ENCODE measurements at regions of chr4 and their contacts with region 1.

Region 1: GRCh38 chr4:38663801-38664705 is at the start of gene KLF3:
- DNase-seq: no peak
- ATAC-seq: peak; percentile 79
- H3K4me3 ChIP-seq: peak within 1 kb of the TSS; percentile 80 to 94 (median 83)
- H3K4me3 Mint-ChIP-seq: peak within 1 kb of the TSS; percentile 97
- H3K27ac ChIP-seq: peak within 1 kb of the TSS; percentile 90 to 92
- H3K27ac Mint-ChIP-seq: peak within 1 kb of the TSS; percentile 96
- H3K4me1 ChIP-seq: peaks cover 55 to 61% of the 10 kb centered on the region in 2 donors
- H3K4me1 Mint-ChIP-seq: peaks cover 62% of the 10 kb centered on the region
- H3K27me3 ChIP-seq: no peaks in the 10 kb centered on the region
- H3K27me3 Mint-ChIP-seq: no peaks in the 10 kb centered on the region
- CTCF ChIP-seq: no peak
- total RNA-seq, gene KLF3: 51.9 and 52.8 TPM in 2 replicates

Region 2: DNA sequence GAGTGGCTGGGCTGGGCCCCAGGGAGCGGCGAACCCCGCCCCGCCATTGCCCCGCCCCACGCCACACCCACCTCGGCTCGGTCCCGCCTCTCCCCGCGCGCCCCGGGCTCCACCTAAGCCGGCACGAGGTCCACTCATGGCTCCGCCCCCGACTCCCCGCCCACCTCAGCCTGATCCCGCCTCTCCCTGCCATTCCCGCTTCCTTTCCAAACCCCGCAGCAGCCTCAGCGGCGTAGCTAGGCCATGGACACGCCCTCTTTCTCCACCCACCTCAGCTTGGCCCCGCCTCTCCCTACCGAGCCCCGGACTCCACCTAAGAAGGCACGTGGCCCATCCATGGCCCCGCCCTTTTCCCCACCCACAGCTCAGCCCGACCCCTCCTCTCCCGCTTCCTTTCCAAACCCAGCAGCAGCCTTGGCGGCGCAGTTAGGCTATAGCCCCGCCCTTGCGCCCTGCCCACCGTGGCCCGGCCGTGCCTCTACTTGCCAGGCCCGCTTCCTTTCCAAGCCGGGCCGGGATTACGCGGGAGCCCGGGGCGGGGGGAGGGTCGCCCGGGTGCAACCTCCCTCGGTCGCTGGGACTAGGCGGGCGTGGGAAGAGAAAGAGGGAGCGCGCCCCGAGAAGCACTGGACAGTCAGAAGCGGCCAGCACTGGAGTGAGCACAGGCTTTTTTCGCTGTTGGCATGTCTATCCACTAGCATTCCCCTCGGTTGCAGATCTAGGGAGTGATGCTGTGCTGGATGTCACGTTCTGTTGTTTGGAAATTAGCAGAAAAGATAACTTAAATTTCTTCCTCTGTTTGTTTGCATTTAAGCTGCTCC is 977.5 kb before region 1 on chr4 and contains the start of gene RELL1:
- CTCF ChIA-PET with region 1: no interaction called
- POLR2A ChIA-PET with region 1: no interaction called
- intact Hi-C with region 1: loop called (anchors 10 kb)
- DNase-seq: peak; percentile 96
- ATAC-seq: peak; percentile 85
- H3K4me3 ChIP-seq: peak within 1 kb of the TSS; percentile 66 to 86 (median 81)
- H3K4me3 Mint-ChIP-seq: peak within 1 kb of the TSS; percentile 92
- H3K27ac ChIP-seq: peak within 1 kb of the TSS; percentile 45 to 70
- H3K27ac Mint-ChIP-seq: peak within 1 kb of the TSS; percentile 89
- H3K4me1 ChIP-seq: peaks cover 31% of the 10 kb centered on the region in 2 donors
- H3K4me1 Mint-ChIP-seq: peaks cover 31% of the 10 kb centered on the region
- H3K27me3 ChIP-seq: peaks cover 0 to 12% (median 4%) of the 10 kb centered on the region in 4 experiments
- H3K27me3 Mint-ChIP-seq: peaks cover 12% of the 10 kb centered on the region
- CTCF ChIP-seq: no peak
- total RNA-seq, gene RELL1: 2.7 and 3.2 TPM in 2 replicates

Region 3: GRCh38 chr4:37977471-37978247 is 686.4 kb before region 1 on chr4:
- CTCF ChIA-PET with region 1: no interaction called
- POLR2A ChIA-PET with region 1: no interaction called
- intact Hi-C with region 1: loop called (anchors 5 kb)
- DNase-seq: peak; percentile 86
- ATAC-seq: peak; percentile 74
- H3K4me3 ChIP-seq: peak overlapping the region; percentile 40 to 91 (median 64)
- H3K4me3 Mint-ChIP-seq: peak overlapping the region; percentile 91
- H3K27ac ChIP-seq: peak overlapping the region; percentile 75 to 93
- H3K27ac Mint-ChIP-seq: peak overlapping the region; percentile 93
- H3K4me1 ChIP-seq: peaks cover 45% of the 10 kb centered on the region in 2 donors
- H3K4me1 Mint-ChIP-seq: peaks cover 51% of the 10 kb centered on the region
- H3K27me3 ChIP-seq: no peaks in the 10 kb centered on the region
- H3K27me3 Mint-ChIP-seq: no peaks in the 10 kb centered on the region
- CTCF ChIP-seq: peak; percentile 78

Region 4: DNA sequence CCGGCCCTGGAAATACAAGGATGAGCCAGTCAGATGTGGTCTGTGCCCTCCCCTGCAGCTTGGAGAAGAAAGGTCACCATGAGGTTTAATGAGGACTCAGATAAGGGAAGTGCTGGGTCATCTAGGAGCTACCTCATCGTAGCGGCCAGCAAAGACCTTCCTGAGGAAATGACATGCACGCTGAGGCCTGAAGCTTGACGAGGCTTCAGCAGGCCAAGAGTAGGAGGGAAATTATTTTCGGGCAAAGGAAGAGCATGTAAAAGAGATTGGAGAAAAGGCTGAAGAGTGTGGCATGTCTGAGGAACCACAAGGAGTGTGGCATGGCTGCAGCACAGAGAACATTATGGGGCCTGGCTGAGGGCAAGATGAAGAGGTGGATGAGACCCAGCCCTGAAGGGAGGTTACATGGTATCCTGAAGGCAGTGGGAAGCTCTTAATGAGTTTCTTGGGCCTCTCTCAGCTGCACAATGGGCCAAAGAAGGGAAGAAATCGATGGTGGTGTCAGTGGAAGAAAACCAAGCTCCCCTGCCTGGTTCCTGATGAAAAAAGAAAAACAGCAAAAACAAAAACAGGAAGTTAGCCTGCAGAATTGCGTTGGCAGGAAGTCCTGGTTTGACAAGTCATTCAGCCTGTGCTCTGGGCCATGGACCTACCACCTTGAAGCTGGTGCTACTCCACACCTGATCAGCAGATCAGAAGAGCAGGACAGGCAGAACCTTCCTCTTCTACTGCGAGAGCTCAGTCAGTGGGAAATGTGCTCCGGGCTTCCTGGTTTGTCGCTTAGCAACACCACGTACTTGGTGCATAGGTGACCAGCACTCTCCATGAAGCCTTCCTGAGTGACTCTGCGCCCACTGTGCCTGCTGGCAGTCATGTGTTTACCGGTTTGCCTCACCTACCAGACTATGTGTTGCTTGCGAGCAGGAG is 134.6 kb before region 1 on chr4:
- CTCF ChIA-PET with region 1: no interaction called
- POLR2A ChIA-PET with region 1: interaction called, 3 read pairs
- intact Hi-C with region 1: loop called (anchors 5 kb)
- DNase-seq: peak; percentile 65
- ATAC-seq: peak; percentile 80
- H3K4me3 ChIP-seq: peak overlapping the region in 1 of 5 experiments; percentile 15
- H3K4me3 Mint-ChIP-seq: peak overlapping the region; percentile 17
- H3K27ac ChIP-seq: peak overlapping the region; percentile 39 to 60
- H3K27ac Mint-ChIP-seq: peak overlapping the region; percentile 76
- H3K4me1 ChIP-seq: peaks cover 14 to 15% of the 10 kb centered on the region in 2 donors
- H3K4me1 Mint-ChIP-seq: peaks cover 16% of the 10 kb centered on the region
- H3K27me3 ChIP-seq: no peaks in the 10 kb centered on the region
- H3K27me3 Mint-ChIP-seq: peaks cover 3% of the 10 kb centered on the region
- CTCF ChIP-seq: no peak

Region 5: DNA sequence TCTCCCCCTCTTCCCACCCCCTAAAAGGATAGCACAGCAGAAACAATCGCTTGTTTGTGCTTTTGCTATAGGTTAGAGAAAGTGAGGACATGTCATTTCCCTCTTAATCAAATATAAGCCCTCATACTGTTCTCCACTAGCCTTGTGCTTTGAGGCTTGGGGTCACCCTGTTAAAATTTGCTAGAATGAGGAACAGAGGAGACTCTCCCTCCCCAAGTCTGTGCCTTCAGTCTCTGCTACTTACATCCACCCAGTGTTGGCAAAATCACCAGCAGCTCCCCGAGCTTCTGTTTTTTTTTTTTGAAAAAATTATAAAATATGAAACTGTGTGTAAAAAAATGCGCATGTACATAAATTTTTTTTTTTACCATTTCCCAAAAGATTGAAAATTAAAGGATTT is 19.2 kb after region 1 on chr4:
- CTCF ChIA-PET with region 1: no interaction called
- POLR2A ChIA-PET with region 1: no interaction called
- intact Hi-C with region 1: no loop called
- DNase-seq: no peak
- ATAC-seq: no peak
- H3K4me3 ChIP-seq: no peak overlapping the region
- H3K4me3 Mint-ChIP-seq: no peak overlapping the region
- H3K27ac ChIP-seq: no peak overlapping the region
- H3K27ac Mint-ChIP-seq: no peak overlapping the region
- H3K4me1 ChIP-seq: peaks cover 3 to 12% of the 10 kb centered on the region in 2 donors
- H3K4me1 Mint-ChIP-seq: peaks cover 30% of the 10 kb centered on the region
- H3K27me3 ChIP-seq: no peaks in the 10 kb centered on the region
- H3K27me3 Mint-ChIP-seq: no peaks in the 10 kb centered on the region
- CTCF ChIP-seq: no peak

Region 6: GRCh38 chr4:38782452-38783108 is 118.5 kb after region 1 on chr4 and contains the start of gene TLR10:
- CTCF ChIA-PET with region 1: no interaction called
- POLR2A ChIA-PET with region 1: no interaction called
- intact Hi-C with region 1: loop called (anchors 10 kb)
- DNase-seq: peak; percentile 88
- ATAC-seq: peak; percentile 90
- H3K4me3 ChIP-seq: peak within 1 kb of the TSS; percentile 50 to 92 (median 72)
- H3K4me3 Mint-ChIP-seq: peak within 1 kb of the TSS; percentile 95
- H3K27ac ChIP-seq: peak within 1 kb of the TSS; percentile 78 to 83
- H3K27ac Mint-ChIP-seq: peak within 1 kb of the TSS; percentile 96
- H3K4me1 ChIP-seq: peaks cover 34 to 51% of the 10 kb centered on the region in 2 donors
- H3K4me1 Mint-ChIP-seq: peaks cover 57% of the 10 kb centered on the region
- H3K27me3 ChIP-seq: no peaks in the 10 kb centered on the region
- H3K27me3 Mint-ChIP-seq: no peaks in the 10 kb centered on the region
- CTCF ChIP-seq: peak; percentile 83
- total RNA-seq, gene TLR10: 51.5 and 53.4 TPM in 2 replicates

Region 7: GRCh38 chr4:38795087-38795486 is 131.0 kb after region 1 on chr4:
- CTCF ChIA-PET with region 1: no interaction called
- POLR2A ChIA-PET with region 1: no interaction called
- intact Hi-C with region 1: no loop called
- DNase-seq: no peak
- ATAC-seq: no peak
- H3K4me3 ChIP-seq: no peak overlapping the region
- H3K4me3 Mint-ChIP-seq: no peak overlapping the region
- H3K27ac ChIP-seq: no peak overlapping the region
- H3K27ac Mint-ChIP-seq: peak overlapping the region; percentile 24
- H3K4me1 ChIP-seq: no peaks in the 10 kb centered on the region
- H3K4me1 Mint-ChIP-seq: peaks cover 12% of the 10 kb centered on the region
- H3K27me3 ChIP-seq: no peaks in the 10 kb centered on the region
- H3K27me3 Mint-ChIP-seq: no peaks in the 10 kb centered on the region
- CTCF ChIP-seq: no peak

Region 8: GRCh38 chr4:38856524-38857337 is 192.7 kb after region 1 on chr4 and contains the start of gene TLR6:
- CTCF ChIA-PET with region 1: no interaction called
- POLR2A ChIA-PET with region 1: no interaction called
- intact Hi-C with region 1: loop called (anchors 5 kb)
- DNase-seq: peak; percentile 87
- ATAC-seq: peak; percentile 56
- H3K4me3 ChIP-seq: peak within 1 kb of the TSS; percentile 51 to 78 (median 70)
- H3K4me3 Mint-ChIP-seq: peak within 1 kb of the TSS; percentile 93
- H3K27ac ChIP-seq: peak within 1 kb of the TSS; percentile 73 to 77
- H3K27ac Mint-ChIP-seq: peak within 1 kb of the TSS; percentile 94
- H3K4me1 ChIP-seq: peaks cover 39 to 43% of the 10 kb centered on the region in 2 donors
- H3K4me1 Mint-ChIP-seq: peaks cover 52% of the 10 kb centered on the region
- H3K27me3 ChIP-seq: no peaks in the 10 kb centered on the region
- H3K27me3 Mint-ChIP-seq: no peaks in the 10 kb centered on the region
- CTCF ChIP-seq: peak; percentile 87
- total RNA-seq, gene TLR6: 54.4 and 60.6 TPM in 2 replicates

Region 9: DNA sequence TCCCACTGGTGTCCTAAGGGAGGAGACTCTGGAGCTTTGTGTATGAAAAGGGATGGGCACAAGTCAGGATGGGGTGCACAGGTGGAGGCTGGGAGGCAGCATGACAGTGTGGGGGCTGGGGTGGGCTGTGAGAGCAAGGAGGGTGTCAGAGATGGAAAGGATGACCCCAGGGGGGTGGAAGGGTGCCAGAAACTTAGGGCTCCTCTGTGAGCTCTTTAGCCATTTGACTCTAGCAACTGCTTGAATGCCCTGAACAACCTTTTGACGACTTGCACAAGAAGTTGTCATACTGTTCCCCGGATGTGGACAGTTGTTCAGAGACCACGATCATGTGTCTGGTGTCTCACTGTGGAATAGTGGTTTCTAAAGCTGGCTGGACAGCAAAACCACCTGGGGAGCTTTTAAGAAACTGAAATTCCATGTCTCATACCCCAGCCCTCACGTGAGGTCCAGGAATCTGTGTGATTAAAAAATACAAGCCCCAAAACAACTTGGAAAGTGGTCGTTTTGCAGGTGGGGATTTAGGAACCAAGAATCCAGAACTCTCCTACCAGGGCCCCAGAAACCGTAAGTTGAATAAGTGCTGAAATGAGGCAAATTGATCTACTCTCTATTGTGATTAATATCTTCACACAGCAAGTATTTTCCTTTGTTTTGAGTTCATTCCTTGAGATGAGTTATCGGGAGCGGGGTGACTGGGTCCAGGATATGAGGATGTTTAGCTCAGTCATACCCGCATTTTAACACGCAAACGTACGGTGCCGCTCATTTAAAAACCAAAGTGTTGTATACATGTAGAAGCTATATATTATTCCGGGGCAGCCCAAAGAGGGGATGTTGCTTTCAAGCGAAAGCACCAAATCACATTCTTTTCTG is 1536.2 kb after region 1 on chr4:
- CTCF ChIA-PET with region 1: no interaction called
- POLR2A ChIA-PET with region 1: no interaction called
- intact Hi-C with region 1: loop called (anchors 10 kb)
- DNase-seq: peak; percentile 63
- ATAC-seq: peak; percentile 19
- H3K4me3 ChIP-seq: peak overlapping the region; percentile 79 to 99 (median 90)
- H3K4me3 Mint-ChIP-seq: peak overlapping the region; percentile 96
- H3K27ac ChIP-seq: peak overlapping the region; percentile 93 to 99
- H3K27ac Mint-ChIP-seq: peak overlapping the region; percentile 91
- H3K4me1 ChIP-seq: peaks cover 53 to 60% of the 10 kb centered on the region in 2 donors
- H3K4me1 Mint-ChIP-seq: peaks cover 64% of the 10 kb centered on the region
- H3K27me3 ChIP-seq: no peaks in the 10 kb centered on the region
- H3K27me3 Mint-ChIP-seq: no peaks in the 10 kb centered on the region
- CTCF ChIP-seq: no peak